Tibial artery (tissue), 4 donors: ENCODE measurements at regions of chr10 and their contacts with region 1.

Region 1: DNA sequence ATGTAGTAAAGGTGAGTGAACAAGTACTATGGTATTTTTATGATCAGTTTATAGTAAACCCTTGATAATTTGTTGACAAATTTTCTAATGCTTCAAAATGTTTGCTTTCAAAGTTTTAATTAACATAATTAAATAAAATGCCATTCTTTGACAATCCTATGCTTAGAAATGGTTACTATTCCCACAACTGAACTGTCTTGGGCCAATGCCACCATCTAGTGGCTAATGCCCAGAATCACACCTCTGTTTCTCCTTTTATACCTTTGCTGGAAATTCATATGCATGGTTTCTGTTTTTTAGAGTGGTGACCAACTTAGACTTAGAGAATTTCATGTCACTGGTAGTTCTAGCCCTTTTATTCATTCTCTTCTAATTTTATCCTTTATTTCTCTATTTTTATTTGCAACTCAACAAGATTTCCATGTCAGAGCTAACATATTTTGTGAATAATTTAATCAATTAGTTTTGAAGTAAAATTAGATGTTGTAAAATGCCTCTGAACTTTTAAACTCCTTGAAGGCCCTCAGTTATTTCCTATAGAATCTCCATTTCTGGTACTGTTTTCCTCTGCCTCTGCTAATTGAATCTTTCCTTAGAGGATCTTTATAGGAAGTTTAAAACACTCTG is 31.1 kb downstream of the PCGF5 start:
- DNase-seq: peak; percentile 48 to 67
- H3K4me3 ChIP-seq: no peak overlapping the region
- H3K27ac ChIP-seq: no peak overlapping the region
- H3K4me1 ChIP-seq: peaks cover 0 to 43% (median 15%) of the 10 kb centered on the region in 4 donors
- H3K27me3 ChIP-seq: no peaks in the 10 kb centered on the region
- CTCF ChIP-seq: peak; percentile 93 to 96

Region 2: DNA sequence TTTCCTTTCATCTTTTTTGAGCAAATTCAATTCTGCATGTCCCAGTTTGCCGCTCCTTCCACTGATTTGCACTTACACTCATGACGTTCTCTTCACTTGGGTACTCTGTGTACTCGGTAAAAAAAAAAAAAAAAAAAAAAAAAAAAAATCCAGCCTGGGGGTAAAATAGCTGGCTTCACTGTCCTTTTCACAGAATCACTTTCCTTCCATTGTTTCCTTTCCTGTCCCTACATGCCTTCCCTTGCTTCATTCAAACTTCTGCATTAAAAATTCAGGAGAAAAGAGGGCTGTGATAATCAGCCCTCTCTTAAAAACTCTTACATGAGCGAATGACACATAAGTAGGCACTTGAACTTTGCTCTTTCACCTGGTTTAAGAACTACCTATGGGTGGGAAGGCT is 339.4 kb before region 1 on chr10:
- intact Hi-C with region 1: loop called (anchors 5 kb)
- DNase-seq: no peak
- H3K4me3 ChIP-seq: no peak overlapping the region
- H3K27ac ChIP-seq: no peak overlapping the region
- H3K4me1 ChIP-seq: peaks cover 0 to 10% (median 0%) of the 10 kb centered on the region in 4 donors
- H3K27me3 ChIP-seq: no peaks in the 10 kb centered on the region
- CTCF ChIP-seq: no peak

Region 3: GRCh38 chr10:91006001-91006751 is 245.4 kb before region 1 on chr10:
- intact Hi-C with region 1: loop called (anchors 2 kb)
- DNase-seq: peak; percentile 56 to 77
- H3K4me3 ChIP-seq: no peak overlapping the region
- H3K27ac ChIP-seq: peak overlapping the region; percentile 54 to 58
- H3K4me1 ChIP-seq: peaks cover 0 to 31% (median 14%) of the 10 kb centered on the region in 4 donors
- H3K27me3 ChIP-seq: no peaks in the 10 kb centered on the region
- CTCF ChIP-seq: peak; percentile 92 to 96

Region 4: GRCh38 chr10:91043173-91043910 is 208.2 kb before region 1 on chr10:
- intact Hi-C with region 1: loop called (anchors 1 kb)
- DNase-seq: no peak
- H3K4me3 ChIP-seq: no peak overlapping the region
- H3K27ac ChIP-seq: peak overlapping the region in 1 of 2 donors; percentile 14
- H3K4me1 ChIP-seq: peaks cover 0 to 27% (median 7%) of the 10 kb centered on the region in 4 donors
- H3K27me3 ChIP-seq: no peaks in the 10 kb centered on the region
- CTCF ChIP-seq: peak; percentile 64 to 70

Region 5: DNA sequence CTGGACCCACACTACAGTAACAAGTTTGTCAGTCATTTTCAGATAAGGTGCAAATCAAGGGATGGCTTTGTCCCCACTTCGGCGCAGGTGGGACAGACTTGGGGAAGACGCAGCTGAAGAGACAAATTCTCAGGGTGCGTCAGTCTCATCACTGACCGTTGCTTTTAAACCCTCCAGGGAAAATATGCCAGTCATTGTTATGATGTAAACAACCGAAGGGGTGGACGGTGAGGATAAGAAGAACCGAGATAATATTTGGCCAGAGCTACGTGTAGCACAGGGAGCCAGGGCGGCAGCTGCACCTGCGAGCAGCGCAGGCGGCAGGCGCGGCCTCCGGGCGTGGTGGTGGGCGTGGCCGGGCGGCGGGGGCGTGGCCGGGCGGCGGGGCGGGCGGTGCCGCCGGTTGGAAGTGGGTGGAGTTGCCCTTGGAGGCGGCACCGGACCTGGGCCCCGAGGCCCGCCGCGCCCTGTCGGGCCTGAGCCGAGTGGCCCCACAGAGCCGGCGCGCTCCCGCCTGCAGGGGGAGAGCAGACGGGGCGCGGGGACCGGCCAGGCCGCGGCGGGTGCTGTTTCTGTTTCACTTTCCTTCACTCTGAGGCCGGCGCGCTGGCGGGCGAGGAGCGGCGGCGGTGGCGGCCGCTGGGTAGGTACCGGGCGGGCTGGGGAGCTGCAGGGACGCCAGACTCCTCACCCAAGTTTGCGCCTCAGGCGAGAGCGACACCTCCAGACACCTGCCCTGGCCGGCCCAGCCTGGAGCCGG is 31.2 kb before region 1 on chr10 and contains the start of gene PCGF5:
- intact Hi-C with region 1: no loop called
- DNase-seq: peak; percentile 84 to 95
- H3K4me3 ChIP-seq: peak within 1 kb of the TSS; percentile 89 to 92
- H3K27ac ChIP-seq: peak within 1 kb of the TSS; percentile 87 to 91
- H3K4me1 ChIP-seq: peaks cover 0 to 68% (median 28%) of the 10 kb centered on the region in 4 donors
- H3K27me3 ChIP-seq: no peaks in the 10 kb centered on the region
- CTCF ChIP-seq: peak; percentile 41 to 55